GM10248 (cell line): ENCODE measurements at regions of chr20 and their contacts with region 1.

Region 1: DNA sequence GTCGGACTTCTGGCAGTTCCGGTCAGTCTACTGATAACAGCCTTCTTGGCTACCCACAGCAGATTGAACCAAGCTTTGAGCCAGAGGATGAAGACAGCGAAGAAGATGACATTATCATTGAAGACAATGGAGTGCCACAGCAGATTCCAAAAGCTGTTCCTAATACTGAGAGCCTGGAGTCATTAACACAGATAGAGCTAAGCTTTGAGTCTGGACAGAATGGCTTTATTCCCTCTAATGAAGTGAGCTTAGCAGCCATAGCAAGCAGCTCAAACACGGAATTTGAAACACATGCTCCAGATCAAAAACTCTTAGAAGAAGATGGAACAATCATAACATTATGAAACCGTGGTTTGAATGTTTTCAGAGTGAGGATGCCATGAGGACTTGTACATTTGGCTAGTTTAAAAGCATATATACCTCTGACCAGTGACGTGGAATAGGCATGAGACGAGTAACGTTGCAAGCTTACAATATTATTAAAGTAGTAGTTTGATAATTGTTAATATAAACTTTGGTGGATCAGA is 18.8 kb downstream of the PARD6B start:
- DNase-seq: no peak
- CTCF ChIP-seq: no peak

Region 2: DNA sequence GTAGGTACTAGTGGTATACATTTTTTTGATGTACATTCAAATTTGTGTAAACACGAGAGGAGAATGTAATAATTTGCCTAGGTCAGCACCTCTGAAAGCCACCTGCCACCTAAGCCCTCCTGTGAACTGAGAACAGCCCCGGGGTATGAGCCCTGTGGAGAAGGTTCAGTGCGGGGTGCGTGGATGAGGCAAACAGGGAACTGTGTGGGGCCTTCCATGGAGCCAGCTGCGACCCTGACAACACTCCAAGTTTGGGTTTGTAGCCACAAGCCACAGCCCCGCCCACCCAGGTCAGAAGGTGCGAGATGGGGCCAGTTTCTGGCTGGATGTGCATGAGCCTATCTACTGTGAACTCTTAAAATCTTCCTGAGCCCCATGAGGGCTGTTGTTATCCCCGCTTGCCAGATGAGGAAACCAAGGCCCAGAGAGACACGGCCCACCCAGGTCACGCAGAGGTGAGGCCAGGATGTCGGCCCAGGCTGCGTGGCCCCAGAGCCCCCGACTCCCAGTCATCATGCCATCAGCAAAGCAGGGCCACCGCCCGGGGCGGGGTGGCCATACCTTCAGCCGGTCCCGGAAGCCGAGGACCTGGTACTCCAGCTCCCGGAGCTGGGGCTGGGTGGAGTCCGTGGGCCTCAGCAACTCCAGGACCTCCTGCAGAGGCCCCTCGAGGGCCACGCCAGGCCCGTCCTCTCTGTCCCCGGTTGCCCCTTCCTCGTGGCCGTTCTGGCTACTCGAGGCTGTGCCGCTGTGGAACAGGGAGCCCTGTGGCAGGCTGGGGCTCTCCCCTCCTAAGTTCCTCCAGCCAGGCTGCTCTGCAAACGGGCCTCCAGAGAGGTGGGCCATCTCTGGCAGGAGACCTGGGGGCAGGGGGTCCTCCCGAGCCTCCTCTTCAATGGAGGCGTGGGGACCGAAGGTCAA is 148.4 kb before region 1 on chr20:
- CTCF ChIA-PET with region 1: no interaction called
- POLR2A ChIA-PET with region 1: no interaction called
- DNase-seq: no peak
- CTCF ChIP-seq: no peak

Region 3: DNA sequence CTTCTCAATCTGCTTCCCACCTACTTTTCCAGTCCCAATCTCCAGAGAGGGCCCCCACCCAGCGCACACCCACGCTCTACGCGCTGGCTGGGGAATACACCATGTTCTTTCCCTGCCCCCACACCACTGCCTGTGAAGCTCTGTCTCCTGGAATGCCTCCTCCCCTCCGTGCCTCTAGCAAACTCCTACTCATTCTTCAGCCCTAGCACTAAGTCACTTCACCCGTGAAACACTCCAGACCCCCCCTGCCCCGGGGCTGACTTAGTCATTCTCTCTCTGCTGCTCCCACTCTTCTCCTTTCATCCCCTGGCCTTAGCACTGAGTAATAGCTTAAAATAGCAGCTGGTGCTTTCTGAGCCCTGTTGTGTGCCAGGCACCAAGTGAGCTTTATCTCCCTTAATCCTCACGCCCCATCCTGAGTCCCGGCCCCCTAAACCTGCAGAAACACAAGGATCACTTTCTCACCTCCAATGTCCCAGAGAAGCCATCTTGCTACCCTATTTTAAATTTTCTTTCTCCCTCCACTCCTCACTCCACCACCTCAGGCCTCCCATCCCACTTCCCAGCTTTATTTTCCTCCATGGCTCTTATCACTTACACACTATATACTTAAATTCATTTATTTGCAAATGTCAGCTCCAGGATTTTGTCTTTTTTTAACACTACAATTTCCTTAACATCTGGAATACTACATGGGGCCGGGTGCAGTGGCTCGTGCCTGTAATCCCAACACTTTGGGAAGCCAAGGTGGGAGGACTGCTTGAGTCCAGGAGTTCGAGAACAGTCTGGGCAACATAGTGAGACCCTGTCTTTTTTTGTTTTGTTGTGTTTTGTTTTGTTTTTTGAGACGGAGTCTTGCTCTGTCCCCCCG is 25.1 kb before region 1 on chr20:
- CTCF ChIA-PET with region 1: interaction called, 19 read pairs
- POLR2A ChIA-PET with region 1: no interaction called
- DNase-seq: peak; percentile 45
- CTCF ChIP-seq: no peak

Region 4: GRCh38 chr20:50731872-50732690 is 18.1 kb before region 1 on chr20:
- CTCF ChIA-PET with region 1: interaction called, 23 read pairs
- POLR2A ChIA-PET with region 1: no interaction called
- DNase-seq: no peak
- CTCF ChIP-seq: no peak

Region 5: GRCh38 chr20:50737352-50737751 is 12.9 kb before region 1 on chr20:
- CTCF ChIA-PET with region 1: interaction called, 23 read pairs
- POLR2A ChIA-PET with region 1: no interaction called
- DNase-seq: no peak
- CTCF ChIP-seq: no peak

Region 6: GRCh38 chr20:50762435-50763201 is 12.4 kb after region 1 on chr20:
- CTCF ChIA-PET with region 1: interaction called, 21 read pairs
- POLR2A ChIA-PET with region 1: no interaction called
- DNase-seq: no peak
- CTCF ChIP-seq: no peak

Region 7: GRCh38 chr20:50784464-50784863 is 34.3 kb after region 1 on chr20:
- CTCF ChIA-PET with region 1: interaction called, 18 read pairs
- POLR2A ChIA-PET with region 1: interaction called, 3 read pairs
- DNase-seq: no peak
- CTCF ChIP-seq: no peak

Region 8: DNA sequence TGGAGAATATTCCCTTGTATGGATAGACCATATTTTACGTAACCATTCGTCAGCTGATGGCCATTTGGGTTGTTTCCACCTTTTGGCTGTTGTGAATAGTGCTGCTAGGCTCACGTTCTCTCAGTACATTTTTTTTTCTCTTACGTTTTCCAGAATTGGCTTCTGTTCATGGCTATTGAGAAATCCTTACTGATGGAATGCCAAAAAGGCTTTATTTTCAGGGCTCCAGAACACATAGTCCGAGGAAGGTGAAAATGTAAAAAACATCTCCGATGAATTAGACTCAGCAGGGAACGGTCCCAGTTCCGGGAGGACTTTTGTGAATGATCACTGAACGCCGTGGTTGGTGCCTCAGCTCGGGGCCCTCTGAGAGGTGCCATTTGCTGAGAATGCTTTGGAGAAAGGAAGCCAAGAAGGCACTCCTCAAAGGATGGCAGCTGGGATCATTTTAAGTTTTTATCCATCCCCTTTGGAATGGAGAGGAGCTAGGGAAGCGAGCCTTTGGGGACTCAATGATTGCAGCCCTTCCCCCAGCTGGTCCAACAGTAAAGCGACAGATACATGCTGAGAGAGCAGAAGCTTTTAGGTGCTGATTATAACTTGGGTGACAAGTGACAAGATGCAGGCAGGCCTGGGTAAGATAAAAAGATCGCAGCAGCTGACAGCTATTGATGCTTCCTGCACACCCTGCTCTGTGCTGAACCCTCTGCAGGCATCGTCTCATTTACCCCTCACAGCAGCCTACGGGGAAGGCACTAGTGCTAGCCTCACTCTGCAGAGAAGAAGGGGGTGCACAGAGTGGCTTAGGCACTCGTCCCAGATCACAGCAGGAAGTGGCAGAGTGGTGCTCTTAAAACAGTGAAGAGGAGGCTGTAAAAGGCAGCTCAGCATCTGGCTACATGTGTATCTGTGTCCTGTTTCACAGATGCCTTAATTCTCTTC is 406.1 kb after region 1 on chr20:
- CTCF ChIA-PET with region 1: no interaction called
- POLR2A ChIA-PET with region 1: no interaction called
- DNase-seq: no peak
- CTCF ChIP-seq: no peak